ENCODE measurements at regions of chr12 and their contacts with region 1.

Region 1: DNA sequence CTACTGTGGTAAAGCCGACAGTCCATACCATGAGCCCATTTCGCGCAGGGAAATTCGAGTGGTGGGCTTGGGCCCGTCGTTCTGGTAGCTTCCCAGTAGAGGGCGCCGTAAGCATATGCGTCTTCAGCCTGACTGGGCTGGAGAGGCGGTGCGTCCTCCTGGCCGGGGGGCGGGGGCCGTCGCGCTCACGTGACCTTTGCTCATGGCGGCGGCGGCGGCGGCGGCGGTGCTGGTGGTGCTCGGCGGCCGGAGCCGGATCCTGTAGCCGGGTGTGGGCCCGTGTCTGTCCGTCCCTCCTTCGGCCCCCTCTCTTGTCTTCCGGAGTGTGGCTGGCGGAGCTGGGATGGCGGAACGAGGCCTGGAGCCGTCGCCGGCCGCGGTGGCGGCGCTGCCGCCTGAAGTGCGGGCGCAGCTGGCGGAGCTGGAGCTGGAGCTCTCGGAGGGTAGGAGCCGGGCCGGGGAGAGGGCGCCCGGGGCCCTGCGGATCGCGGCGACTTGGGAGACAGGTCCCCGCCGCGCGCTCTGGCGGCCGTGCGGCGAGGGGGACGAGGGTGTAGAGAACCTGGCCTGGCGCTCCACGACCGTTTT is at the start of gene DIP2B:
- DNase-seq: peak; percentile 73 to 95
- ATAC-seq: peak; percentile 91 to 93
- H3K4me3 ChIP-seq: peak within 1 kb of the TSS; percentile 62
- H3K27ac ChIP-seq: peak within 1 kb of the TSS; percentile 88 to 94
- H3K4me1 ChIP-seq: peaks cover 40% of the 10 kb centered on the region
- CTCF ChIP-seq: peak; percentile 93
- EP300 ChIP-seq: no peak
- POLR2A ChIP-seq: peak; percentile 66
- RAD21 ChIP-seq: peak; percentile 98 to 99
- polyA plus RNA-seq, gene DIP2B: 29.3 and 32.8 TPM in 2 replicates

Region 2: GRCh38 chr12:50308593-50308992 is 196.3 kb before region 1 on chr12:
- CTCF ChIA-PET with region 1: no interaction called
- POLR2A ChIA-PET with region 1: no interaction called
- DNase-seq: no peak
- ATAC-seq: no peak
- H3K4me3 ChIP-seq: no peak overlapping the region
- H3K27ac ChIP-seq: no peak overlapping the region
- H3K4me1 ChIP-seq: peaks cover 32% of the 10 kb centered on the region
- CTCF ChIP-seq: no peak
- EP300 ChIP-seq: no peak
- POLR2A ChIP-seq: no peak
- RAD21 ChIP-seq: no peak

Region 3: GRCh38 chr12:50390284-50390683 is 114.6 kb before region 1 on chr12:
- CTCF ChIA-PET with region 1: no interaction called
- POLR2A ChIA-PET with region 1: no interaction called
- DNase-seq: peak; percentile 35 to 69
- ATAC-seq: peak; percentile 80 to 82
- H3K4me3 ChIP-seq: no peak overlapping the region
- H3K27ac ChIP-seq: peak overlapping the region; percentile 61 to 67; a peak in 5 of 6 replicates
- H3K4me1 ChIP-seq: peaks cover 30% of the 10 kb centered on the region
- CTCF ChIP-seq: no peak
- EP300 ChIP-seq: no peak
- POLR2A ChIP-seq: no peak
- RAD21 ChIP-seq: no peak

Region 4: GRCh38 chr12:50581201-50582184 is 76.6 kb after region 1 on chr12:
- CTCF ChIA-PET with region 1: interaction called, 12 read pairs
- POLR2A ChIA-PET with region 1: no interaction called
- DNase-seq: no peak
- ATAC-seq: peak in 1 of 2 experiments; percentile 40; a peak in 3 of 6 replicates
- H3K4me3 ChIP-seq: no peak overlapping the region
- H3K27ac ChIP-seq: peak overlapping the region in 1 of 2 experiments; percentile 36; a peak in 2 of 6 replicates
- H3K4me1 ChIP-seq: peaks cover 42% of the 10 kb centered on the region
- CTCF ChIP-seq: no peak
- EP300 ChIP-seq: no peak
- POLR2A ChIP-seq: no peak
- RAD21 ChIP-seq: no peak

Region 5: DNA sequence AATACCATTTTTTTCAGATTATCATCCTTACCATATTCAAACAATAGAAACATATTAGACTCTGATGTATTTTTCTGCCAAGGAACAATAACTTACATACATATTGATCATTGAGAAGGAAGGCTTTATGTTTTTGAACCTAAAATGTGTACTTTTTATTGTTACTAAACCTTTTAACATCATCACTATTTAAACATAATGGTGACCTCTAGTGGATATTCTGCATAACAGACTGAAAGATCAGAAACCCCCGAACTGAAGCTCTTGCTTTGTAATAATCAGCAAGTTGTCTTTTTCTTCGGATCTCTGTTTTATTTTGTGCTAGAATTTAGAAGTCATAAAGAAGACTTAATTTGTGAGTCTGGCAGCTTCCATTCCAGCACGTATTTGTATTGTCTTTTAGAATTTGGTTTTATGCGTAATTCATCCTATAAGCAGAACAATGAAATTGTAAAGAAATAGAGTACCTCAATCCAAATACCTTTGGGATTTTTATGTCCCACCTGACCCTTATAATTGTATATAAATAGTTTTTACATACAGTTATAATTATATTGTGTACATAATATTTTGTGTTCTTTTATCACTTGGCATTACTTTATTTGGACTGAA is 133.1 kb after region 1 on chr12:
- CTCF ChIA-PET with region 1: interaction called, 182 read pairs
- POLR2A ChIA-PET with region 1: interaction called, 3 read pairs
- DNase-seq: peak; percentile 35 to 54
- ATAC-seq: 0 out of 6 replicates have a peak, but pooled peaks of 1 of the 2 experiments have one; percentile 43
- H3K4me3 ChIP-seq: no peak overlapping the region
- H3K27ac ChIP-seq: no peak overlapping the region; a peak in 1 of 6 replicates
- H3K4me1 ChIP-seq: peaks cover 35% of the 10 kb centered on the region
- CTCF ChIP-seq: peak; percentile 85
- EP300 ChIP-seq: no peak
- POLR2A ChIP-seq: no peak
- RAD21 ChIP-seq: peak; percentile 84 to 87

Region 6: GRCh38 chr12:50689437-50689836 is 184.5 kb after region 1 on chr12:
- CTCF ChIA-PET with region 1: interaction called, 17 read pairs
- POLR2A ChIA-PET with region 1: no interaction called
- DNase-seq: no peak
- ATAC-seq: no peak
- H3K4me3 ChIP-seq: no peak overlapping the region
- H3K27ac ChIP-seq: no peak overlapping the region
- H3K4me1 ChIP-seq: no peaks in the 10 kb centered on the region
- CTCF ChIP-seq: no peak
- EP300 ChIP-seq: no peak
- POLR2A ChIP-seq: no peak
- RAD21 ChIP-seq: no peak

Region 7: GRCh38 chr12:50734409-50735263 is 229.7 kb after region 1 on chr12:
- CTCF ChIA-PET with region 1: interaction called, 24 read pairs
- POLR2A ChIA-PET with region 1: no interaction called
- DNase-seq: peak; percentile 51 to 52
- ATAC-seq: peak; percentile 88 to 89
- H3K4me3 ChIP-seq: no peak overlapping the region
- H3K27ac ChIP-seq: no peak overlapping the region
- H3K4me1 ChIP-seq: peaks cover 9% of the 10 kb centered on the region; the same call in 2 of the 3 replicates
- CTCF ChIP-seq: peak; percentile 70
- EP300 ChIP-seq: no peak
- POLR2A ChIP-seq: no peak
- RAD21 ChIP-seq: peak; percentile 67 to 72